B cell (primary cell): ENCODE measurements at regions of chr6 and their contacts with region 1.

Region 1: GRCh38 chr6:99402448-99402847 is 8.5 kb upstream of the COQ3 start:
- DNase-seq: no peak
- ATAC-seq: no peak
- H3K4me3 ChIP-seq: no peak overlapping the region
- H3K4me3 Mint-ChIP-seq: no peak overlapping the region
- H3K27ac ChIP-seq: no peak overlapping the region
- H3K27ac Mint-ChIP-seq: no peak overlapping the region
- H3K4me1 ChIP-seq: no peaks in the 10 kb centered on the region
- H3K4me1 Mint-ChIP-seq: no peaks in the 10 kb centered on the region
- H3K27me3 ChIP-seq: no peaks in the 10 kb centered on the region
- H3K27me3 Mint-ChIP-seq: no peaks in the 10 kb centered on the region
- CTCF ChIP-seq: no peak

Region 2: DNA sequence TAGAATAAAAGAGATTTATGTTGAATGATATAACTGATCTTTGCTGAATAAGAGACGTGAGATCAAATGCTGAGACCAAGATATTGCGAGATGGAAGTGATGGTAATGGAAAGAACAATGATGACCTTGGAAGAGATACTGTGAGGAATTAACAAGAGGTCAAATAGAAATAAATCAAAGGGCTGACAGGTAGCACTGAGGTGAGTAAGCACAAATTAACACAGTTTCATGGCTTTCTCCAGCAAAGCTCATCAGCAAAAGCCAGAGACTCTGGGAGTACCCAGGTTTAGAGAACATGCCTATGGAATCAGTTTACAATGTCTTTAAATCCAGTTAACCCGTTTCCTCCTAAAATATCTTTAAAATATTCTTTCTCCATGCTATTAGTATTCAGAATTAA is 514.8 kb before region 1 on chr6:
- CTCF ChIA-PET with region 1: no interaction called
- POLR2A ChIA-PET with region 1: no interaction called
- intact Hi-C with region 1: no loop called
- DNase-seq: no peak
- ATAC-seq: no peak
- H3K4me3 ChIP-seq: no peak overlapping the region
- H3K4me3 Mint-ChIP-seq: no peak overlapping the region
- H3K27ac ChIP-seq: no peak overlapping the region
- H3K27ac Mint-ChIP-seq: no peak overlapping the region
- H3K4me1 ChIP-seq: no peaks in the 10 kb centered on the region
- H3K4me1 Mint-ChIP-seq: no peaks in the 10 kb centered on the region
- H3K27me3 ChIP-seq: no peaks in the 10 kb centered on the region
- H3K27me3 Mint-ChIP-seq: no peaks in the 10 kb centered on the region
- CTCF ChIP-seq: no peak

Region 3: DNA sequence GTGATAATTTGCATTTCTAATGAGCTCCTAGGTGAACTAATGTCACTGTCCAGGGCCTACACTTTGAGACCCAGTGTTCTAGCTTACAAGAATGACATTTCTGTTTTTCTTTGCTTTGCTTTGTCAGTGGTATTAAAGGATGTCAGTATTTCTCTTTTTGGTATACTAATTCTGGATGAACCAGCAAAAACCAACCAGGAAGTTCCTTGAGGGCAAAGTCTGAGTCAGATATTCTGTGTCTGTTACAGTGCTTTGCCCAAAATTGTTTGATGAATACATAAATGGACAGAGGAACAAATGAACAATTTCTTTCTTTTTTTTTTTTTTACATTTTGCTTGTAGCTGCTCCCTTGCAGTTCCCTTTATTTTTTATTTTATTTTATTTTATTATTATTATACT is 23.8 kb before region 1 on chr6:
- CTCF ChIA-PET with region 1: no interaction called
- POLR2A ChIA-PET with region 1: no interaction called
- intact Hi-C with region 1: no loop called
- DNase-seq: no peak
- ATAC-seq: no peak
- H3K4me3 ChIP-seq: no peak overlapping the region
- H3K4me3 Mint-ChIP-seq: no peak overlapping the region
- H3K27ac ChIP-seq: no peak overlapping the region
- H3K27ac Mint-ChIP-seq: no peak overlapping the region
- H3K4me1 ChIP-seq: no peaks in the 10 kb centered on the region
- H3K4me1 Mint-ChIP-seq: no peaks in the 10 kb centered on the region
- H3K27me3 ChIP-seq: no peaks in the 10 kb centered on the region
- H3K27me3 Mint-ChIP-seq: no peaks in the 10 kb centered on the region
- CTCF ChIP-seq: no peak

Region 4: GRCh38 chr6:99416892-99417767 is 14.7 kb after region 1 on chr6:
- CTCF ChIA-PET with region 1: no interaction called
- POLR2A ChIA-PET with region 1: no interaction called
- intact Hi-C with region 1: loop called (anchors 2 kb)
- DNase-seq: peak; percentile 44
- ATAC-seq: peak; percentile 56
- H3K4me3 ChIP-seq: no peak overlapping the region
- H3K4me3 Mint-ChIP-seq: peak overlapping the region; percentile 64
- H3K27ac ChIP-seq: peak overlapping the region; percentile 7 to 84
- H3K27ac Mint-ChIP-seq: peak overlapping the region; percentile 71
- H3K4me1 ChIP-seq: peaks cover 21 to 39% of the 10 kb centered on the region in 2 donors
- H3K4me1 Mint-ChIP-seq: peaks cover 52% of the 10 kb centered on the region
- H3K27me3 ChIP-seq: no peaks in the 10 kb centered on the region
- H3K27me3 Mint-ChIP-seq: no peaks in the 10 kb centered on the region
- CTCF ChIP-seq: no peak